ENCODE measurements at regions of chr17 and their contacts with region 1.

Region 1: GRCh38 chr17:74770498-74771318 is 5.4 kb downstream of the NAT9 start:
- DNase-seq: peak; percentile 43
- H3K4me3 ChIP-seq: no peak overlapping the region
- H3K27ac ChIP-seq: no peak overlapping the region
- H3K4me1 ChIP-seq: no peaks in the 10 kb centered on the region
- H3K27me3 ChIP-seq: no peaks in the 10 kb centered on the region
- CTCF ChIP-seq: peak; percentile 66 to 76
- POLR2A ChIP-seq: no peak

Region 2: GRCh38 chr17:74663566-74663965 is 107.1 kb before region 1 on chr17:
- CTCF ChIA-PET with region 1: no interaction called
- POLR2A ChIA-PET with region 1: no interaction called
- dilution Hi-C with region 1: no loop called
- intact Hi-C with region 1: no loop called
- DNase-seq: no peak
- H3K4me3 ChIP-seq: no peak overlapping the region
- H3K27ac ChIP-seq: no peak overlapping the region
- H3K4me1 ChIP-seq: no peaks in the 10 kb centered on the region
- H3K27me3 ChIP-seq: no peaks in the 10 kb centered on the region
- CTCF ChIP-seq: no peak
- POLR2A ChIP-seq: no peak

Region 3: GRCh38 chr17:74742153-74742515 is 28.6 kb before region 1 on chr17:
- CTCF ChIA-PET with region 1: interaction called, 84 read pairs
- POLR2A ChIA-PET with region 1: interaction called, 4 read pairs
- dilution Hi-C with region 1: no loop called
- intact Hi-C with region 1: loop called (anchors 1 kb)
- DNase-seq: peak; percentile 37
- H3K4me3 ChIP-seq: no peak overlapping the region
- H3K27ac ChIP-seq: no peak overlapping the region
- H3K4me1 ChIP-seq: peaks cover 8% of the 10 kb centered on the region
- H3K27me3 ChIP-seq: peaks cover 17 to 26% of the 10 kb centered on the region in 2 experiments
- CTCF ChIP-seq: no peak
- POLR2A ChIP-seq: no peak

Region 4: DNA sequence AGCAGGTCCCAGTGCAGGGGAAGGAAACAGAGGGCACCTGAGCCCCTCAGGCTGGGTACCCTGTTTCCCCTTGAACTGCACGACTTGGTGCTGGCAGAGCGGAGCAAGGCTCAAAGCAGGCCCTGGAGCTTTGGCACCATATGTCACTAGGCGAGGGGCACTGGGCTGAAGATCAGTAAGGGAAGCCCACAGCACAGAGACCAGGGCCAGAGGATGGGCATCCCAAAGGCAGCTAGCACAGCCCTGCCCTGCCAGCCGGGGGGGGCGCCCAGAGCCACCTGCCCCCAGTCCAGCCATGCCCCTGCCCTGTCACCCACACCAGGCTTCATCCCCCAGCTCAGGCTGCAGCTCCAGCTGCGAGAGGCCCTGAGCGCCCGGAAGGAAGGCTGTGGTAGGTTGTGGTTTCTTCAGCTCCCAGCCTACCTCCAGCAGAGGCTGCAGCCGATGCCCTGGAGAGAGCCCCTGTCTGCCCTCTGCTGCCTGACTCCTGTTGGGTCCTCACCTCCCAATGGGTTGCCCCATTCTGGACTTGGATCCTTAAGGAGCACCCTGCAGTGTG is 11.4 kb before region 1 on chr17:
- CTCF ChIA-PET with region 1: interaction called, 14 read pairs
- POLR2A ChIA-PET with region 1: interaction called, 5 read pairs
- dilution Hi-C with region 1: no loop called
- intact Hi-C with region 1: no loop called
- DNase-seq: no peak
- H3K4me3 ChIP-seq: no peak overlapping the region
- H3K27ac ChIP-seq: no peak overlapping the region
- H3K4me1 ChIP-seq: peaks cover 7% of the 10 kb centered on the region
- H3K27me3 ChIP-seq: no peaks in the 10 kb centered on the region
- CTCF ChIP-seq: no peak
- POLR2A ChIP-seq: no peak

Region 5: DNA sequence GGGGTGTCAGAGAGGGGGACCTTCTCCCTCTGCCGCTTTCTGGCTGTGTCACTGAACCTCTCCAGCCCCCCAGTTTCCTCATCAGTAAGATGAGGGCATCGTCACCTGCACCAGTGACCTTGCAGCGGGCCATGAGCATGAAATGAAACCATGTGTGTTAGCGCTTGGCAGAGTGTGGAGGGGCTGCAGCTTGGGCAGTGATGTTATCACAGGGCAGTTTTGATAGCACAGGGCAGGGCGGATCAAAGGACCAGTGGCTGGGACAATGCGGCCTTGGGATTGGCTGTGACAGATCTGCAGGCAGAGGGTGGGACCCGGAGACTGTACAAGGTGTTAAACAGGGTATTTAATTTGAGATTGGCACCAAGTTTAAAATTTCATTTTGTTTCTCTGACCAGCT is 44.4 kb after region 1 on chr17:
- CTCF ChIA-PET with region 1: no interaction called
- POLR2A ChIA-PET with region 1: no interaction called
- dilution Hi-C with region 1: no loop called
- intact Hi-C with region 1: no loop called
- DNase-seq: no peak
- H3K4me3 ChIP-seq: no peak overlapping the region
- H3K27ac ChIP-seq: no peak overlapping the region
- H3K4me1 ChIP-seq: no peaks in the 10 kb centered on the region
- H3K27me3 ChIP-seq: no peaks in the 10 kb centered on the region
- CTCF ChIP-seq: no peak
- POLR2A ChIP-seq: no peak

Measured in endothelial cell of umbilical vein (primary cell).